Activated CD8-positive, alpha-beta T cell treated with anti-CD3 and anti-CD28 coated beads for 36 hours (primary cell): ENCODE measurements at regions of chr12 and their contacts with region 1.

Region 1: GRCh38 chr12:94532490-94533422 is 73.1 kb upstream of the CEP83 start:
- DNase-seq: peak; percentile 82
- ATAC-seq: peak; percentile 87
- H3K4me3 Mint-ChIP-seq: no peak overlapping the region
- H3K27ac Mint-ChIP-seq: no peak overlapping the region
- H3K4me1 Mint-ChIP-seq: peaks cover 2% of the 10 kb centered on the region
- H3K27me3 Mint-ChIP-seq: peaks cover 7% of the 10 kb centered on the region
- CTCF ChIP-seq: peak; percentile 79

Region 2: DNA sequence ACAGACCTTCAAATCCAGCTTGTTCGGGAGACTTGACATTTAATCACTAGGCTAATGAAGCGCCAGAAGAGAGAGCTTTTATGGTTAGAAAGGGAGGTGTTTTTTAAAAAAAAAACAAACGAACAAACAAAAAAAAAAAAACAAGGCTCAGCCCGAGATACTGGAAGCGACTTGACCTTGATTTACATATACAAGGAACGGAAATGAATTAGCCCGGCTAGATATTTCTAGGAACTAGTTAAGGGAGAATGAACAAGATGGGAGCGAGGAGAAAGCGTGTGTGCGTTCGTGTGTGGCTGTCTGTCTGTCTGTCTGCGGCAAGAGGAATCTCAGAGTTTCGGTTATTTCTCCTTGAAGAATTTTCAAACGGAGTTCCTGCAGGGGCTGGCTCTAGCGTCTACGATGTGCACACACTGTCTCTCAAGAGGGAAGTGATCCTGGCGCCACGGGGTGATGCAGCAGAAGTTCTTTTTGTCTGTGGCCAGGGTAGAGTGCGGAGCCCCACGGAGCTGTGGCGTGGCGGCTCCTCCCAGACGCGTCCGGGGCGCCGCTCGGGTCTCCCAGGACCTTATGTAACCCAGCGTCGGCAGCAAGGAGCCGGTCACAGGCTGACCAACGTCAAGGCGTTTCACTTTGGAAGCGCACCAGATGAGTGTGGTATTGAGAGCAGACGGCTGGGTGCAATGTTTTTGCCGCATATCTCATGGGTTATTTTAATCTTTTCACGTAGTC is 941.5 kb before region 1 on chr12:
- CTCF ChIA-PET with region 1: no interaction called
- POLR2A ChIA-PET with region 1: no interaction called
- intact Hi-C with region 1: no loop called
- DNase-seq: peak; percentile 50
- ATAC-seq: peak; percentile 72
- H3K4me3 Mint-ChIP-seq: peak overlapping the region; percentile 80
- H3K27ac Mint-ChIP-seq: no peak overlapping the region
- H3K4me1 Mint-ChIP-seq: peaks cover 11% of the 10 kb centered on the region
- H3K27me3 Mint-ChIP-seq: peaks cover 50% of the 10 kb centered on the region
- CTCF ChIP-seq: no peak

Region 3: GRCh38 chr12:94140556-94140955 is 392.2 kb before region 1 on chr12:
- CTCF ChIA-PET with region 1: interaction called, 13 read pairs
- POLR2A ChIA-PET with region 1: no interaction called
- intact Hi-C with region 1: loop called (anchors 2 kb)
- DNase-seq: peak; percentile 65
- ATAC-seq: peak; percentile 79
- H3K4me3 Mint-ChIP-seq: no peak overlapping the region
- H3K27ac Mint-ChIP-seq: no peak overlapping the region
- H3K4me1 Mint-ChIP-seq: peaks cover 6% of the 10 kb centered on the region
- H3K27me3 Mint-ChIP-seq: peaks cover 2% of the 10 kb centered on the region
- CTCF ChIP-seq: peak; percentile 61

Region 4: GRCh38 chr12:94545935-94546771 is 13.4 kb after region 1 on chr12:
- CTCF ChIA-PET with region 1: no interaction called
- POLR2A ChIA-PET with region 1: no interaction called
- intact Hi-C with region 1: no loop called
- DNase-seq: peak; percentile 28
- ATAC-seq: peak; percentile 42
- H3K4me3 Mint-ChIP-seq: no peak overlapping the region
- H3K27ac Mint-ChIP-seq: no peak overlapping the region
- H3K4me1 Mint-ChIP-seq: no peaks in the 10 kb centered on the region
- H3K27me3 Mint-ChIP-seq: no peaks in the 10 kb centered on the region
- CTCF ChIP-seq: no peak

Region 5: DNA sequence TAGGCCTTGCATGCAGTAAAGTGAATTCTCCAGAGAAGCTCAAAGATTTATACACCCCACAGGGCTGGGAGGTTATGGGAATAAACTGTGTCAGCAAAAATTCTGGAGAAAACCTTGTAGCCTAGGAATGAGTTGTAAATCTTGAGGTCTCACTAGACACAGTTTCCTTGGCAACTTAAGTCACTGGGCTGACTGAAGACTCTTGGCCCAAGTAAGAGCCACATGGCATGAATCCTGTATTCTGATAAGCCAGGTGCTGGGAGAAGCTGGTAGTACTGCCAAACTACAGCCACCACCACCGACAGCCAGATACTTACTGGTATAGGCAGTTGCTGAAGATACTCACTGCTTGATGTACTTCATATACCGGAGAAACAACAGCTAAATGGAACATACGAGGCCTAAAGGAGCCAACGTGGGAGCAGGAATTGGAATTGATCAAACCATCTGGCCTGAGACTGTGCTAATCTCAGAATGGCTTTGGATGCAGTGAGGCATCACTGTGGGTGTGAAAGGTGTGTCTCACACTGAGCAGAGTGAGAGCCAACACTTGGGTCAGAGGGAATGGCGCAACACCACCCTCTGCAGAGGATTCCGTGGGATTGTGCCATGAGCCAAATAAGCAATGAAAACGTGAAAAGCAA is 220.4 kb after region 1 on chr12:
- CTCF ChIA-PET with region 1: no interaction called
- POLR2A ChIA-PET with region 1: no interaction called
- intact Hi-C with region 1: no loop called
- DNase-seq: no peak
- ATAC-seq: no peak
- H3K4me3 Mint-ChIP-seq: no peak overlapping the region
- H3K27ac Mint-ChIP-seq: no peak overlapping the region
- H3K4me1 Mint-ChIP-seq: no peaks in the 10 kb centered on the region
- H3K27me3 Mint-ChIP-seq: peaks cover 15% of the 10 kb centered on the region
- CTCF ChIP-seq: no peak